Activated T-helper 1 cell treated with anti-CD3 and anti-CD28 coated beads, Interleukin-12 subunit alpha, Interleukin-12 subunit beta, Interleukin-2, Interleukin-4 antibody, amounts not matched to agents 30 ng/mL and 10 ng/mL and 1 ng/mL, durations not matched to agents 14 hours and 24 hours and 36 hours (primary cell): ENCODE measurements at regions of chr3 and their contacts with region 1.

Region 1: GRCh38 chr3:86774082-86774691 is 216.8 kb downstream of the VGLL3 start:
- DNase-seq: no peak
- H3K4me3 Mint-ChIP-seq: no peak overlapping the region
- H3K27ac Mint-ChIP-seq: no peak overlapping the region
- H3K4me1 Mint-ChIP-seq: no peaks in the 10 kb centered on the region
- H3K27me3 Mint-ChIP-seq: no peaks in the 10 kb centered on the region

Region 2: DNA sequence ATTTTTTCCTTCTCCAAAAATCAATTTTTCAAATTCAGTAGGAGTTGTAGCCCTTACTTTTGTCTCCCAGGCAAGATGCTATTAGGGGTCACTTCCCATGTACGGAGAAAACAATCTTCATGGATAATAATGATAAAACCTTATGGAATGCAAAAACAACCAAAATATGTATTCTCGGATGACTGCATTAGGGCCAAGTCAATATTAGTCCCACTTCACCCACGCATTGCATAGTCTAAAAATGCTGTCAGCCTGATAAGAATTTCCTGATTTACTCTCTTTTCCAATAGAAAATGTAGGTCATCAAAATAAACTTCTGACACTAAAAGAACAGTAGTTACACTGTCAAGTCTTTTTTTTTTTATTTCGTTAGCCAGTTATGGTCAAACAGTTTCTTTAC is 214.0 kb after region 1 on chr3:
- intact Hi-C with region 1: loop called (anchors 5 kb)
- DNase-seq: no peak
- H3K4me3 Mint-ChIP-seq: no peak overlapping the region
- H3K27ac Mint-ChIP-seq: no peak overlapping the region
- H3K4me1 Mint-ChIP-seq: no peaks in the 10 kb centered on the region
- H3K27me3 Mint-ChIP-seq: peaks cover 29% of the 10 kb centered on the region

Region 3: DNA sequence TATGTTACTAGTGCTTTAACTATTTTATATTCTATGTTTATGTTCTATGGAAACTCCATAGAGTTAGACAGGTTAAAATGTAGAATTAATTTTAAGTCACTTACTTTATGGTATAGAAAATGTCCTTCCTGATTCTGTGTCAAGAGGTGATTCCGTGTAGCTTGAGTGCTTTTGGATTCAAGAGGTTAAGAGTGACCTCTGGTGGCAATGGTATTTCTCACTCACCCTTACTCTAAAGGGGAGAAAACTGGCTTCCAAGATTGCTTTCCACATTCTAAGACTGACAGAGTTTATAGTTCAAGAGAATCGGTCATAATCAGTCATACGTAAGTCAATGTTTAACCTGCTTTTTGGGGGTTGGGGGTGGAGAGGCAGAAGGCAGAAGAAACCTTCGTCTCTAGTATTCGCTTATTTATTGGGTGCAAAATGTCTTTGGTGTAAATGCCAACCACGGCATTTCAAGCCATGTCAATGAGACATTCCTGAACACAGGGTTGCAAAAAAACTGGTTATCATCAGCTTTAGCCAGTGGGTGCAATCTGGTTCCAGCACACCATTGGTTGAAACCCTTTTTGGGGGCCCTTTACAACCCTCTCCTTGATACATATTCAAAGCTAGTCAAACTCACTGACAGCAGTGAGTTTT is 308.7 kb after region 1 on chr3:
- intact Hi-C with region 1: loop called (anchors 2 kb)
- DNase-seq: no peak
- H3K4me3 Mint-ChIP-seq: no peak overlapping the region
- H3K27ac Mint-ChIP-seq: no peak overlapping the region
- H3K4me1 Mint-ChIP-seq: peaks cover 12% of the 10 kb centered on the region
- H3K27me3 Mint-ChIP-seq: no peaks in the 10 kb centered on the region

Region 4: GRCh38 chr3:87167628-87168456 is 393.7 kb after region 1 on chr3:
- intact Hi-C with region 1: loop called (anchors 1 kb)
- DNase-seq: peak; percentile 16
- H3K4me3 Mint-ChIP-seq: no peak overlapping the region
- H3K27ac Mint-ChIP-seq: no peak overlapping the region
- H3K4me1 Mint-ChIP-seq: peaks cover 4% of the 10 kb centered on the region
- H3K27me3 Mint-ChIP-seq: peaks cover 2% of the 10 kb centered on the region